Endothelial cell of umbilical vein (primary cell): ENCODE measurements at regions of chr11 and their contacts with region 1.

Region 1: DNA sequence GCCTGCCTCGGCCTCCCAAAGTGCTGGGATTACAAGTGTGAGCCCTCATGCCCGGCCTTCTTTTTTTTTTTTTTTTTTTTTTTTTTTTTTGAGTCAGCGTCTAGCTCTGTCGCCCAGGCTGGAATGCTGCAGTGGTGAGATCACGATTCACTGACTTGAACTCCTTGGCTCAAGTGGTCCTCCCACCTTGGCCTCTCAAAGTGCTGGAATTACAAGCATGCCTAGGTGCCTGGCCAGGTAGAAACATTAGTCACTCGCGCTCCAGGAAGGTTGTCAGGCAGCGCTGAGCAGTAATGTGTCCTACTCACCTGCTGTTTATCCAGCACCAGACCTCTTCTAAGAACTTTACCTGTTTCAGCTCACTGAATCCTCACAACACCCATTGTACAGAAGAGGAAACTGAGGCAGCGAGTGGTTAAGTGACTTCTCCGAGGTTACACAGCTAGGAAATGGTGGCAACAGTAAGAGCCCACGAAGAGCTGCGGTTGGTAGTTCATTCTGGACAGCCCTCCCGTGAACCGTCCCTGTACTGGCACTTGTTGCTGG is 496 bp upstream of the CST6 start:
- DNase-seq: no peak
- H3K4me3 ChIP-seq: no peak overlapping the region
- H3K27ac ChIP-seq: no peak overlapping the region
- H3K4me1 ChIP-seq: peaks cover 20% of the 10 kb centered on the region
- H3K27me3 ChIP-seq: peaks cover 2% of the 10 kb centered on the region in 2 experiments
- CTCF ChIP-seq: no peak
- POLR2A ChIP-seq: no peak

Region 2: DNA sequence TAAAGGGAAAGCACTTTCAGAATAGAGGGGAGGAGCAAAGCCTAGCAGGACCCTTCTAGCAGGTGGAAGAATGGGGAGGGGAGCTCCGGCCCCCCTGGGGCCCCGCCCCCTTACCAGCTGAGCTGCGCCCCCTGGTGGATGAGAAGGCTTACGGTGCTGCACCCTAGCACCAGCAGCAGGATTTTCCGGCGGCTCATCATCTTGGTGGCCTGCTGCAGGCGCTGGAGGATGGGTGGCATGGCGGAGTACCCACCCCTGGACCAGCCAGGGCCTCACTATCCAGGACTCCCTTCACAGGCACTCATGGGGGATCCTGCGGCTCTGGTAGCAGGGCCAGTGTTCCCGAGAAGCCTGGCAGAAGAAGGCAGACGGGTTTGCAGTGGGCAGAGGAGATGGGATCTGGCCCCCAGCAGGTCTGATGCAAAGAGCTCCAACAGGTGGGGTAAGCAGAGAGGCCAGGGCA is 33.9 kb after region 1 on chr11:
- CTCF ChIA-PET with region 1: interaction called, 11 read pairs
- POLR2A ChIA-PET with region 1: no interaction called
- dilution Hi-C with region 1: no loop called
- intact Hi-C with region 1: no loop called
- DNase-seq: peak; percentile 69
- H3K4me3 ChIP-seq: no peak overlapping the region
- H3K27ac ChIP-seq: no peak overlapping the region
- H3K4me1 ChIP-seq: no peaks in the 10 kb centered on the region
- H3K27me3 ChIP-seq: peaks cover 2 to 3% of the 10 kb centered on the region in 2 experiments
- CTCF ChIP-seq: peak; percentile 91 to 98
- POLR2A ChIP-seq: no peak